ENCODE measurements at regions of chr2 and their contacts with region 1.

Region 1: GRCh38 chr2:36322108-36322507 is 33.5 kb upstream of the CRIM1 start:
- DNase-seq: peak in 1 of 2 experiments; percentile 35
- H3K4me3 ChIP-seq: no peak overlapping the region
- H3K4me3 Mint-ChIP-seq: no peak overlapping the region
- H3K27ac Mint-ChIP-seq: no peak overlapping the region
- H3K4me1 ChIP-seq: no peaks in the 10 kb centered on the region
- H3K4me1 Mint-ChIP-seq: no peaks in the 10 kb centered on the region
- H3K27me3 ChIP-seq: no peaks in the 10 kb centered on the region
- H3K27me3 Mint-ChIP-seq: no peaks in the 10 kb centered on the region
- CTCF ChIP-seq: peak; percentile 43 to 67

Region 2: GRCh38 chr2:35973132-35973736 is 348.9 kb before region 1 on chr2:
- CTCF ChIA-PET with region 1: no interaction called
- POLR2A ChIA-PET with region 1: no interaction called
- intact Hi-C with region 1: loop called (anchors 1 kb)
- DNase-seq: peak in 1 of 2 experiments; percentile 39
- H3K4me3 ChIP-seq: no peak overlapping the region
- H3K4me3 Mint-ChIP-seq: no peak overlapping the region
- H3K27ac Mint-ChIP-seq: no peak overlapping the region
- H3K4me1 ChIP-seq: no peaks in the 10 kb centered on the region
- H3K4me1 Mint-ChIP-seq: no peaks in the 10 kb centered on the region
- H3K27me3 ChIP-seq: no peaks in the 10 kb centered on the region
- H3K27me3 Mint-ChIP-seq: peaks cover 7% of the 10 kb centered on the region
- CTCF ChIP-seq: peak; percentile 79 to 81

Region 3: GRCh38 chr2:36123995-36124394 is 198.1 kb before region 1 on chr2:
- CTCF ChIA-PET with region 1: no interaction called
- POLR2A ChIA-PET with region 1: no interaction called
- intact Hi-C with region 1: no loop called
- DNase-seq: no peak
- H3K4me3 ChIP-seq: no peak overlapping the region
- H3K4me3 Mint-ChIP-seq: no peak overlapping the region
- H3K27ac Mint-ChIP-seq: no peak overlapping the region
- H3K4me1 ChIP-seq: no peaks in the 10 kb centered on the region
- H3K4me1 Mint-ChIP-seq: no peaks in the 10 kb centered on the region
- H3K27me3 ChIP-seq: no peaks in the 10 kb centered on the region
- H3K27me3 Mint-ChIP-seq: peaks cover 15% of the 10 kb centered on the region
- CTCF ChIP-seq: no peak

Region 4: GRCh38 chr2:36203366-36203765 is 118.7 kb before region 1 on chr2:
- CTCF ChIA-PET with region 1: interaction called, 3 read pairs
- POLR2A ChIA-PET with region 1: no interaction called
- intact Hi-C with region 1: loop called (anchors 5 kb)
- DNase-seq: no peak
- H3K4me3 ChIP-seq: no peak overlapping the region
- H3K4me3 Mint-ChIP-seq: no peak overlapping the region
- H3K27ac Mint-ChIP-seq: no peak overlapping the region
- H3K4me1 ChIP-seq: no peaks in the 10 kb centered on the region
- H3K4me1 Mint-ChIP-seq: no peaks in the 10 kb centered on the region
- H3K27me3 ChIP-seq: no peaks in the 10 kb centered on the region
- H3K27me3 Mint-ChIP-seq: peaks cover 8% of the 10 kb centered on the region
- CTCF ChIP-seq: no peak

Region 5: GRCh38 chr2:36355151-36355889 is 33.2 kb after region 1 on chr2 and contains the start of gene CRIM1:
- CTCF ChIA-PET with region 1: no interaction called
- POLR2A ChIA-PET with region 1: no interaction called
- intact Hi-C with region 1: no loop called
- DNase-seq: peak; percentile 89 to 91
- H3K4me3 ChIP-seq: peak within 1 kb of the TSS; percentile 97
- H3K4me3 Mint-ChIP-seq: peak within 1 kb of the TSS; percentile 97
- H3K27ac Mint-ChIP-seq: peak within 1 kb of the TSS; percentile 93
- H3K4me1 ChIP-seq: peaks cover 48% of the 10 kb centered on the region
- H3K4me1 Mint-ChIP-seq: peaks cover 56% of the 10 kb centered on the region
- H3K27me3 ChIP-seq: no peaks in the 10 kb centered on the region
- H3K27me3 Mint-ChIP-seq: no peaks in the 10 kb centered on the region
- CTCF ChIP-seq: no peak
- total RNA-seq, gene CRIM1: 270 and 292 TPM in 2 replicates